ENCODE measurements at regions of chr6 and their contacts with region 1.

Region 1: DNA sequence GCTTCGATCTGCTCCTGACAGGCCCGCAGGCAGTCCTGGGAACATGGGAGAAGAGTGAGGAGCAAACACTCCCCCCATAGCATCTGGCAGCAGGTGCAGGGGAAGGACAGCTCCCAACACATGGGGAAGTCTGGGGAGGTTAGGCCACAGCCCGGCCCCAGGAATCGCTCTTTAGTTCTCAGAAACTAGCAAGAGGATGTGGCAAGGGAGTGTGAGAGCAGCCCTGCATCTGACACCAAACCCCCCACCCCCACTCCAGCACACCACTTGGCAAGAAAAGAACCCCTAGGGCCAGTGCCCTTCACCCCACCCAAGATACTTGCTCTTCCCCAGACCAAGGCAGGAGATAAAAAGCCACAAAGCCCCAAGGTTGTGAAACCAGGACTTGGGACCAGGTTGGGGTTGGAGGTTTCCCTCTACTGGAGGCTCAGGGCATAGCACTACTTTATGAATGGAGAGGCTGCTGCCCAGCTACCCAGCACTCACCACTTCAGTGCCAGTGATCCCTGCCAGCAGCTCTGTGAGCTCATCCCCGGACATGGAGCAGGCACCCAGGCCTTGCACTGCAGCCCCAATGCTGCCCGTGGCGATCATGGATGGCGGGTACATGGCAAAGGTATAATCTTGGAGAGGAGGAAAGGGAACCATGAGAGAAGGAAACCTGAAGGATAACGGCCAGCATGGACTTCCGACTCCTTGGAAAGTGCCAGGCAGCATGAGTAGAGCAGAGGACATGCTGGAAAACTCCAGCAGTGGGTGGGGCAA is 5.4 kb downstream of the CCND3 start:
- DNase-seq: peak; percentile 64 to 87
- H3K4me3 ChIP-seq: no peak overlapping the region
- CTCF ChIP-seq: peak in 1 of 3 donors; percentile 41
- POLR2A ChIP-seq: no peak

Region 2: DNA sequence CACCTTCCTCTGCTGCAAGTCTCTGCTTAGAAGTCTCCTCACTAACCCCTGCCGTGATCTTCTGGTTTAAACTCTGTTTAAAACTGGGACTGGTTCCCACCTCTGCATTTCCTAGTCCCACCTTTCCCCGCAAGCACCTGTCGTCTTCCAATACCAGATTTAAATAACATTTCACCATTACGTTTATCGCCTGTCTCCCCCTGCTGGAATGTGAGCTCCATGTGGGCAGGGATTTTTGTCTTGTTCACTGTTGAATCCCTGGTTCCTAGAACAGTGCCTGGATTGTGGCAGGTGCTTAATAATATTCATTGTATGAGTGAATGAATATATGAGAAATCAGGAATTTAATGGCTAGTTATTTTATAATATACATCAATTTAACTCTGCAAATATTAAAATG is 239.6 kb after region 1 on chr6:
- intact Hi-C with region 1: loop called (anchors 10 kb)
- DNase-seq: no peak
- H3K4me3 ChIP-seq: no peak overlapping the region
- CTCF ChIP-seq: no peak
- POLR2A ChIP-seq: no peak

Region 3: GRCh38 chr6:43347021-43347420 is 1410.8 kb after region 1 on chr6:
- intact Hi-C with region 1: no loop called
- DNase-seq: no peak
- H3K4me3 ChIP-seq: no peak overlapping the region
- CTCF ChIP-seq: no peak
- POLR2A ChIP-seq: no peak